H1 (cell line): ENCODE measurements at regions of chr17 and their contacts with region 1.

Region 1: GRCh38 chr17:33949100-33949499 is 306.0 kb upstream of the CCL2 start:
- DNase-seq: peak; percentile 25 to 73
- H3K4me3 ChIP-seq: no peak overlapping the region
- H3K27ac ChIP-seq: no peak overlapping the region
- H3K4me1 ChIP-seq: no peaks in the 10 kb centered on the region
- H3K27me3 ChIP-seq: no peaks in the 10 kb centered on the region
- CTCF ChIP-seq: peak; percentile 82 to 92 (median 92)
- EP300 ChIP-seq: no peak
- POLR2A ChIP-seq: no peak
- RAD21 ChIP-seq: peak; percentile 84 to 88

Region 2: DNA sequence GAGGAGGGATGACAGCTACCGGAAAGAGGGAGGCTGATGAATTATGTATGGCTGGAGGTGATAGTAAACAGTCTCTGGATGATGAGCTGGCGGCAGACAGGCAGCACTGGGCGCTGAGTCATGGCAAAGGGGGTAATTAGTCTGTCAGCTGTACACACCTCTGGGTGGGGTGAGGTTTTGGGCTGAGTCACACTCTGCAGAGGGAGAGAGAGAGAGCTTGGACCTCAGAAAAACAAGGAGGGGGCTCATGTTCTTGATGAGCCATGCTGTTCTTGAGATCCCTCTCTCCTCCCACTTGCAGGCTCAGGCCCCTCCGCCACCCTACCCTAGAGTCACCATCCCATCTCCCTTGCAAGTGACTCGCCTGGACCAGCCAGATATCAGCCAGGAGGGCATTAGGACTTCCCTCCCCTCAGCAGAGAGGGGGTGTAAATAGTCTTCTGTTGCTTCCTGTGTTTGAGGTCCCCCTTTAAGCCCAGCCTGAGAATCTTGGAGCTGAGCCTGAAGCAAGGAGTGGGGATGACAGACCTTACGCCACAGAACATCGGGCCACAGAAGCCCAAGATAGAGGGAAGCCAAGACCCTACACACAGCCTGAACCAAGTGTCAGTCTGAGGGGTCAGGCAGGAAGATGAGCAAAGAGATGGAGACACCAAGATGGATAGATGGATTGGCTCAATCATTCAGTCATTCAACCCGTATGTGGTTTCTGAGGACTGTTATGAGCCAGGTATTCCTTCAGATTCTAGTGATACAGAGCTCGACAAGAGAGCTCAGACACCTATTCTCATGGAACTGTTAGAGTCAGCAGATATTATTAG is 77.2 kb before region 1 on chr17:
- CTCF ChIA-PET with region 1: no interaction called
- POLR2A ChIA-PET with region 1: no interaction called
- DNase-seq: no peak
- H3K4me3 ChIP-seq: no peak overlapping the region
- H3K27ac ChIP-seq: no peak overlapping the region
- H3K4me1 ChIP-seq: no peaks in the 10 kb centered on the region
- H3K27me3 ChIP-seq: no peaks in the 10 kb centered on the region
- CTCF ChIP-seq: no peak
- EP300 ChIP-seq: no peak
- POLR2A ChIP-seq: no peak
- RAD21 ChIP-seq: no peak

Region 3: GRCh38 chr17:33927732-33928133 is 21.4 kb before region 1 on chr17:
- CTCF ChIA-PET with region 1: interaction called, 94 read pairs
- POLR2A ChIA-PET with region 1: no interaction called
- DNase-seq: no peak
- H3K4me3 ChIP-seq: no peak overlapping the region
- H3K27ac ChIP-seq: no peak overlapping the region
- H3K4me1 ChIP-seq: peaks cover 6 to 29% (median 18%) of the 10 kb centered on the region in 4 experiments
- H3K27me3 ChIP-seq: peaks cover 0 to 2% (median 0%) of the 10 kb centered on the region in 4 experiments; a peak in 1 of 7 replicates
- CTCF ChIP-seq: peak in 2 of 3 experiments; percentile 43 to 50; a peak in 2 of 4 replicates
- EP300 ChIP-seq: no peak
- POLR2A ChIP-seq: no peak
- RAD21 ChIP-seq: peak; percentile 62 to 74

Region 4: DNA sequence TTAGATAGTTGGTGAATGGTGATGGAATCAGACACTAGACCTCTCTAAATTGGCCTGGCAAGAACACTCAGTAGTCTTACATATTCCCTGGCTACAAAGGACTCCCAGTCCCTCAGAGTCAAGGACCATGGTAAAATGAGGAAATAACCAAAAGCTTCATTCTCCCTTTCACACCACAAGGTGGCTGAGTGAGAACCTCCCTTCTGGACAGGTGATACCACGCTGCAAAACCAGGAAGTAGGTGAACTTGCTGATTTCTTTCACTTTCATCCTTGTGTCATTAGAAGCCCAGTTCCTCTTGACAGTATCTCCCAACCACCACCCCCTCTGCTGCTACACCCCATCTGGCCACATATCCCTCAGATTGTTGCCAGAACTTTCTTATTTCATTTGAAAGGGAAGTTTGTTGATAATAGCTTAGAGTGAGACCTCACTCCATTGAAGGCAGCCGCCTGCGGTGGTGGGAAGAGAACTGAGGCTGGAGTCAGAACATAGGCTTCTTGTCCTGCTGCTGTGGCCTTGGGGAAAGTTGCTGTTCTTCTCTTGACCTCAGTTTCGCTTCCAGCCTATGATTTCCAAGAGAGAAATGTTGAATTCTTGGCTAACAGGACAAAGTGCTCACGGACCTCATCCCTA is 15.4 kb after region 1 on chr17:
- CTCF ChIA-PET with region 1: interaction called, 28 read pairs
- POLR2A ChIA-PET with region 1: no interaction called
- DNase-seq: no peak
- H3K4me3 ChIP-seq: no peak overlapping the region
- H3K27ac ChIP-seq: no peak overlapping the region
- H3K4me1 ChIP-seq: peaks cover 0 to 4% (median 1%) of the 10 kb centered on the region in 4 experiments; a peak in 2 of 7 replicates
- H3K27me3 ChIP-seq: no peaks in the 10 kb centered on the region
- CTCF ChIP-seq: peak in 2 of 3 experiments; percentile 49 to 61; a peak in 3 of 4 replicates
- EP300 ChIP-seq: no peak
- POLR2A ChIP-seq: no peak
- RAD21 ChIP-seq: peak; percentile 42 to 54; a peak in 3 of 4 replicates

Region 5: GRCh38 chr17:33976831-33977230 is 27.7 kb after region 1 on chr17:
- CTCF ChIA-PET with region 1: no interaction called
- POLR2A ChIA-PET with region 1: no interaction called
- DNase-seq: peak in 1 of 2 experiments; percentile 17
- H3K4me3 ChIP-seq: no peak overlapping the region
- H3K27ac ChIP-seq: no peak overlapping the region
- H3K4me1 ChIP-seq: peaks cover 0 to 6% (median 0%) of the 10 kb centered on the region in 4 experiments; a peak in 2 of 7 replicates
- H3K27me3 ChIP-seq: no peaks in the 10 kb centered on the region
- CTCF ChIP-seq: no peak
- EP300 ChIP-seq: no peak
- POLR2A ChIP-seq: no peak
- RAD21 ChIP-seq: no peak